CD4-positive, alpha-beta memory T cell (primary cell): ENCODE measurements at regions of chr19 and their contacts with region 1.

Region 1: GRCh38 chr19:41795031-41795461 is 1.3 kb upstream of the CEACAM3 start:
- DNase-seq: peak; percentile 54 to 65 (median 58)
- H3K4me3 ChIP-seq: no peak overlapping the region
- H3K4me3 Mint-ChIP-seq: no peak overlapping the region
- H3K27ac ChIP-seq: no peak overlapping the region
- H3K27ac Mint-ChIP-seq: no peak overlapping the region
- H3K4me1 ChIP-seq: no peaks in the 10 kb centered on the region
- H3K4me1 Mint-ChIP-seq: peaks cover 0 to 4% (median under 1%) of the 10 kb centered on the region in 4 donors
- H3K27me3 ChIP-seq: no peaks in the 10 kb centered on the region
- H3K27me3 Mint-ChIP-seq: peaks cover 27 to 31% of the 10 kb centered on the region in 2 donors

Region 2: DNA sequence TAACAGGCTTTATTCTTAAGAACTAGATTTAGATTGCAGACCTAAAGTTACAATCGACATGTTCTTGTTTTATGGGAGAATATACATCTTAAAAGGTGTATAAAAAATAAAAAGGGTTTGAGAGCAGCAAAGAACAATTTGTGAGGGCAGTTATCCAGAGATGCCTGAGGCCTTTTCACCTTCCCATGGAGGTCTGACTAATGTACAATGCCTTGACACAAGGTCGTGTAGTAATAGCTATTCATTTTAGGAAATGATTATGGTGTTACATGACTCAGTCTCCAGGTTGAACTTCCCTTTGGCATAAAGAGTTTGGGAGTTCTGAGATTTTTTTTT is 19.7 kb before region 1 on chr19:
- CTCF ChIA-PET with region 1: interaction called, 15 read pairs
- POLR2A ChIA-PET with region 1: no interaction called
- intact Hi-C with region 1: no loop called
- DNase-seq: no peak
- H3K4me3 ChIP-seq: no peak overlapping the region
- H3K4me3 Mint-ChIP-seq: peak overlapping the region in 3 of 8 donors; percentile 64 to 74 (median 67)
- H3K27ac ChIP-seq: no peak overlapping the region
- H3K27ac Mint-ChIP-seq: peak overlapping the region in 1 of 7 donors; percentile 87
- H3K4me1 ChIP-seq: peaks cover 39% of the 10 kb centered on the region
- H3K4me1 Mint-ChIP-seq: peaks cover 26 to 45% (median 34%) of the 10 kb centered on the region in 4 donors
- H3K27me3 ChIP-seq: peaks cover 18% of the 10 kb centered on the region
- H3K27me3 Mint-ChIP-seq: peaks cover 54 to 61% of the 10 kb centered on the region in 2 donors

Region 3: DNA sequence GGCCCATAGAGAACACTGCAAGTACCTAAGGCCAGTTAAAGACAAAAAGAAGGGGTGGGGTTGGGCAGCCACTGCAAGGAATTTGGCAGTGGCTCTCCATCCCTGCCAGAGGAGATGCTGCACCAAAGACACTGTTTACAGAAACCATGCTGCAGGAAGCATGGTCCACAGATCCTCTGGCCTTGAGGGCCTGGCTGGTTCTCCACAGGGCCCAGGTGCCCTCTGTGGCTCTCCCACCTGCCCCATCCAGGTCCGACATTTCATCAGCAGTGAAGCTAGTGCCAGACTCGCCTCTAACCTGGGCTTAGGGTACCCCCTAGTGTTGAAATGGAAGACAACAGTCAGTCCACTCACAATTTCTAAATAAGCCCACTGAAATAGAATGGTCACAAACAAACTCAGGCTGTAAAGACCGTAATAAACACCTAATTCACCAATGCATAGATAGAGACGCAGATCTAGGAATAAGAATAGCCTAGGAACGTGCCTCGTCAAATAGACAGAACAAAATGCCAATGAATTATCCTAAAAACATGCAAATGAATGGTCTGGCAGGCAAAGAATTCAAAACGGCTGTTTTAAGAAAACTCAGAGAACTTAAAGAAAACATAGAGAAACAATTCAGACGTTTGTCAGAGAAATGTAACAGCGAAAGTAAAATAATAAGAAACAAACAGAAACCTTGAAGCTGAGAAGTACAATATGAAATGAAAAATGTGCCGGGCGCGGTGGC is 26.1 kb after region 1 on chr19:
- CTCF ChIA-PET with region 1: interaction called, 3 read pairs
- POLR2A ChIA-PET with region 1: interaction called, 3 read pairs
- intact Hi-C with region 1: loop called (anchors 1 kb)
- DNase-seq: peak in 4 of 5 donors; percentile 45 to 59 (median 54)
- H3K4me3 ChIP-seq: no peak overlapping the region
- H3K4me3 Mint-ChIP-seq: no peak overlapping the region
- H3K27ac ChIP-seq: no peak overlapping the region
- H3K27ac Mint-ChIP-seq: peak overlapping the region in 1 of 7 donors; percentile 21
- H3K4me1 ChIP-seq: no peaks in the 10 kb centered on the region
- H3K4me1 Mint-ChIP-seq: peaks cover 0 to 3% (median 0%) of the 10 kb centered on the region in 4 donors
- H3K27me3 ChIP-seq: peaks cover 8% of the 10 kb centered on the region
- H3K27me3 Mint-ChIP-seq: peaks cover 8 to 14% of the 10 kb centered on the region in 2 donors

Region 4: DNA sequence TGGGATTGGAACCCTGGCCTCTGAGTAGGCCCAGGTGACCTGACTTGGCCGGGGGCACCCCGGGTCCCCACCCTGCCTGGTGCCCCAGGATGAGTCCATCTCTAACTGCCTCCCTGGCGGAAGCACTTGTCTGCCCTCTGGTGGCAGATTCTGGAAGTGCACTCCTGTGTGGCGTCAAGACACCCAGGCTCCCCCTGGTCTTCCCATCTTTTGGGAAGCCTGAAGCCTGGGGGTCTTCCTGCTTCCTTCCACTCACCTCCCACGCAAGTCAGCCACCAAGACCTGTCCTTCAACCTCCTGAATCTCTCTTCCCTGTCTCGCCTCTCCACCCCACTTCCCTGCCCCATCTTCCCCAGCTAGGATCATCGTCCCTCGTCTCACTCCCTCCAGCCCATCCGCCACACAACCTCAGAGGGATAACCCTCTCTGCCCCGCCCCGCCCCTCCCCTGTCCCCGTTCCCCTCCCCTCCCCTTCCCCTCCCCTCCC is 156.7 kb after region 1 on chr19:
- CTCF ChIA-PET with region 1: interaction called, 6 read pairs
- POLR2A ChIA-PET with region 1: no interaction called
- intact Hi-C with region 1: loop called (anchors 1 kb)
- DNase-seq: peak; percentile 72 to 83 (median 76)
- H3K4me3 ChIP-seq: no peak overlapping the region
- H3K4me3 Mint-ChIP-seq: peak overlapping the region in 2 of 8 donors; percentile 5 to 42
- H3K27ac ChIP-seq: no peak overlapping the region
- H3K27ac Mint-ChIP-seq: peak overlapping the region; percentile 42 to 90 (median 81)
- H3K4me1 ChIP-seq: peaks cover 12% of the 10 kb centered on the region
- H3K4me1 Mint-ChIP-seq: peaks cover 10 to 30% (median 15%) of the 10 kb centered on the region in 4 donors
- H3K27me3 ChIP-seq: no peaks in the 10 kb centered on the region
- H3K27me3 Mint-ChIP-seq: no peaks in the 10 kb centered on the region